Transverse colon (tissue), 4 donors: ENCODE measurements at regions of chr6 and their contacts with region 1.

Region 1: DNA sequence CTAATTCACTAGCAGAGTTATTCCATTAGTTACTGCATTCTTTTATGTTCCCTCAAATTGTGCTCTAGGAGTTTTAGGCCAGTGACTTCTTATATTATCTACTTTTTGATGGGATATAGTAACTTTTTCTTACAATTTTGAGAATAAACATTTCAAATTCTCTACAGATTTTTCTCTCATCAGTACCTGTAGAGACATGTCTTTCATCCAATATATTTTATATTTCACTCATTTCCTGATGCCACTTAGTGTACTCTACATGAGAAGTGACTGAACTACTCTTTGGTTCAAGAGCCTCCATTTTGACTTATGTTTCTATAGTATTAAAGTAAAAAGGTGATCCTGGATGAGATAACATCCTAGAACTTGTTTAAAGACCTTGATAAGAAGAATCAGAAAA is 108.5 kb downstream of the ELOVL4 start:
- DNase-seq: no peak
- H3K4me3 ChIP-seq: no peak overlapping the region
- H3K27ac ChIP-seq: no peak overlapping the region
- H3K4me1 ChIP-seq: no peaks in the 10 kb centered on the region
- H3K27me3 ChIP-seq: no peaks in the 10 kb centered on the region
- CTCF ChIP-seq: no peak
- EP300 ChIP-seq: no peak
- POLR2A ChIP-seq: no peak

Region 2: DNA sequence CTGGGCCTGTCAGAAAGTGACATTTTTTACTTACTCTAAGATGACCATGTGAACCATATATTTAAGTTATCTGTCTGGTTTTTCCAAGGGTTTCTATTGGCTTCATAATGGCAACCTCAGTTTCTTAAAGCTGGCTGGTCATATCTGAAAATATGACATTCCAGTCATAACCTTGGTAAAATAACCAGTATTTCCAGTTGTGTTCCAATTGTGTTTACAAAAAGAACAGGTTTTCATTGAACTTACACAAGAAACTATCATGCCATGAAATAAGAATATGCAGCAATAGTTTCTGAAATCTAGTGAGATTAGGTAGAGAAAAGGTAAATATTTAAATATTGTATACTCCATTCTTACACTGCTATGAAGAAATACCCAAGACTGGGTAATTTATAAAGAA is 542.6 kb before region 1 on chr6:
- in situ Hi-C with region 1: no loop called
- intact Hi-C with region 1: no loop called
- DNase-seq: no peak
- H3K4me3 ChIP-seq: no peak overlapping the region
- H3K27ac ChIP-seq: no peak overlapping the region
- H3K4me1 ChIP-seq: no peaks in the 10 kb centered on the region
- H3K27me3 ChIP-seq: no peaks in the 10 kb centered on the region
- CTCF ChIP-seq: no peak
- EP300 ChIP-seq: no peak
- POLR2A ChIP-seq: no peak

Region 3: GRCh38 chr6:80227545-80228105 is 388.8 kb after region 1 on chr6:
- in situ Hi-C with region 1: no loop called
- intact Hi-C with region 1: loop called (anchors 5 kb)
- DNase-seq: no peak
- H3K4me3 ChIP-seq: no peak overlapping the region
- H3K27ac ChIP-seq: no peak overlapping the region
- H3K4me1 ChIP-seq: no peaks in the 10 kb centered on the region
- H3K27me3 ChIP-seq: no peaks in the 10 kb centered on the region
- CTCF ChIP-seq: no peak
- EP300 ChIP-seq: no peak
- POLR2A ChIP-seq: no peak